Activated naive CD4-positive, alpha-beta T cell treated with anti-CD3 and anti-CD28 coated beads for 36 hours (primary cell): ENCODE measurements at regions of chr6 and their contacts with region 1.

Region 1: DNA sequence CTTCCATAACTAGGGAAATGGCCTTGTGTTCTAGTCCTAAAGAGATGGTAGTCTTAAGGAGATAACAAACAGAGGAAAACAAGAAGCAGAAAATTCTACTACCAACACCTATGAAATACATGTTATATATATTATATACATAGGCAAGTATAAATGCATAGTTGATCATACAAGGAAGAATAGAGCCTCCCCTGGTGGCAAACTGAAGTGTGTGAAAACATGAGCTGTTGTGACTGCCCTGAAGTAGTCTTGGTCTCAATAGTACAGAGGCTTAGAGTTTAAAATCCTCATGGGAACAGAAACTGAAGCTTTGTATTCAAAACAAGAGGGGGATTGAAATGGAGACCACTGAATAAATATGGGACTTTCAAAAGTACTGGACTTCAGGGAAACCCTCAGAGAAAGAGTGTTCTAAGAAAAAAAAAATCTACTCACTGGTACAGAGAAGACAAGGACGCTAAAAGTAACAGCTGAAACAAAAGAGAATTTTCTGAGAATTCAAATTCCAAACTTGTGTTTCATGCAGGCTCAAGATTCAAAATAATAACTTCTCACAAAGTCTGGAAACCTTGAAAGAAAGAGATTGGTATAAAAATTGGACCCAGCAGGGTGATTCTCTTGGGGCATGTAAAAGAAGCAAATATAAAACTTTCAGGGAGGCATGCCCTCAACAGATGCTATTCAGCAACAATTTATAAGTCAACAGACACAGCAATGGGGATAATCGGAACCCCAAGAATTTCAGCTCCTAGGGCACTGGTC is 59.7 kb upstream of the SAMD3 start:
- DNase-seq: peak; percentile 52
- H3K4me3 Mint-ChIP-seq: no peak overlapping the region
- H3K27ac Mint-ChIP-seq: no peak overlapping the region
- H3K4me1 Mint-ChIP-seq: peaks cover 7% of the 10 kb centered on the region
- H3K27me3 Mint-ChIP-seq: no peaks in the 10 kb centered on the region

Region 2: DNA sequence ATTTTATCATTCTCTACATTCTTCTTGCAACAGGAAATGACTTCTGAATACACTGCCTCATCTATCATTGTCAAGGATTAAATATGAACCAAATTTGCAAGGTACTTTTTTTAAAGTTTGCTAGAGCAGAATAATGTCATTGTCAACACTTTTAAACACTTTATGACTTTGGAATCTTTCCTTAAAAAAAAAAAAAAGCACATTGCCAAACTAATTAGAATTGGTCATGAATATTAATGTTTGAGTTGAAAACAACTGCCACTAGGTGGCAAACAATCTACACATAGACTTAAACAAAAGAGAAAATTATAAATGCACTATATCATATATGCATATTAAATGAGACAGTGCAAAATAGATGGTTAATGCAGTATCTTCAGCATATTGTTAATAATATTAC is 388.8 kb before region 1 on chr6:
- CTCF ChIA-PET with region 1: no interaction called
- intact Hi-C with region 1: loop called (anchors 10 kb)
- DNase-seq: no peak
- H3K4me3 Mint-ChIP-seq: no peak overlapping the region
- H3K27ac Mint-ChIP-seq: no peak overlapping the region
- H3K4me1 Mint-ChIP-seq: peaks cover 12% of the 10 kb centered on the region
- H3K27me3 Mint-ChIP-seq: peaks cover 6% of the 10 kb centered on the region

Region 3: GRCh38 chr6:130047088-130047995 is 235.1 kb before region 1 on chr6:
- CTCF ChIA-PET with region 1: interaction called, 7 read pairs
- intact Hi-C with region 1: loop called (anchors 1 kb)
- DNase-seq: no peak
- H3K4me3 Mint-ChIP-seq: no peak overlapping the region
- H3K27ac Mint-ChIP-seq: no peak overlapping the region
- H3K4me1 Mint-ChIP-seq: no peaks in the 10 kb centered on the region
- H3K27me3 Mint-ChIP-seq: no peaks in the 10 kb centered on the region

Region 4: GRCh38 chr6:130132286-130132701 is 150.1 kb before region 1 on chr6:
- CTCF ChIA-PET with region 1: interaction called, 10 read pairs
- intact Hi-C with region 1: loop called (anchors 1 kb)
- DNase-seq: peak; percentile 69
- H3K4me3 Mint-ChIP-seq: peak overlapping the region; percentile 65
- H3K27ac Mint-ChIP-seq: peak overlapping the region; percentile 85
- H3K4me1 Mint-ChIP-seq: peaks cover 59% of the 10 kb centered on the region
- H3K27me3 Mint-ChIP-seq: no peaks in the 10 kb centered on the region

Region 5: DNA sequence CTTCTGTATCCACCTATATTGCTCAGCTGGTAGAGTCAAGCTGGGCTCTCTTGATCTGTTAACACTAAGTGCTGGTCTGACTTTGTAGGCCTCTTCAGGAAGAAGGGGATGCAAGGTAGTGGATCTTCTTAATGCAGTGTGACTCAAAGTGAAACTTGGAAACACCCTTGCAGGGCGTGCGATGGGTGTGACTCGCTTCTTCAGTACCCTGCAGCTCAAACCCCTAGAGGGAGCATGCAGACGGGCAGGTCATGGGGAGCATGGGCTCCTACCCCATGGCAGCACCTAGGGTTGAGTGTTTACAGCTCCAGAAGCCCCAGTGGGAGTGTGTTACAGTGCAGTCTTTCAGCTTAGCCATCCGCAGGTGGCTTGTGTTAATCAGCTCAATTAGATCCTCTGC is 58.9 kb before region 1 on chr6:
- CTCF ChIA-PET with region 1: no interaction called
- intact Hi-C with region 1: loop called (anchors 1 kb)
- DNase-seq: peak; percentile 82
- H3K4me3 Mint-ChIP-seq: no peak overlapping the region
- H3K27ac Mint-ChIP-seq: no peak overlapping the region
- H3K4me1 Mint-ChIP-seq: peaks cover 22% of the 10 kb centered on the region
- H3K27me3 Mint-ChIP-seq: no peaks in the 10 kb centered on the region